ENCODE measurements at regions of chr1 and their contacts with region 1.

Region 1: GRCh38 chr1:2091611-2092604 is 41.7 kb downstream of the PRKCZ start:
- DNase-seq: peak; percentile 79
- ATAC-seq: peak; percentile 78
- H3K4me3 Mint-ChIP-seq: no peak overlapping the region
- H3K27ac Mint-ChIP-seq: no peak overlapping the region
- H3K4me1 Mint-ChIP-seq: peaks cover 3% of the 10 kb centered on the region
- H3K27me3 Mint-ChIP-seq: no peaks in the 10 kb centered on the region

Region 2: DNA sequence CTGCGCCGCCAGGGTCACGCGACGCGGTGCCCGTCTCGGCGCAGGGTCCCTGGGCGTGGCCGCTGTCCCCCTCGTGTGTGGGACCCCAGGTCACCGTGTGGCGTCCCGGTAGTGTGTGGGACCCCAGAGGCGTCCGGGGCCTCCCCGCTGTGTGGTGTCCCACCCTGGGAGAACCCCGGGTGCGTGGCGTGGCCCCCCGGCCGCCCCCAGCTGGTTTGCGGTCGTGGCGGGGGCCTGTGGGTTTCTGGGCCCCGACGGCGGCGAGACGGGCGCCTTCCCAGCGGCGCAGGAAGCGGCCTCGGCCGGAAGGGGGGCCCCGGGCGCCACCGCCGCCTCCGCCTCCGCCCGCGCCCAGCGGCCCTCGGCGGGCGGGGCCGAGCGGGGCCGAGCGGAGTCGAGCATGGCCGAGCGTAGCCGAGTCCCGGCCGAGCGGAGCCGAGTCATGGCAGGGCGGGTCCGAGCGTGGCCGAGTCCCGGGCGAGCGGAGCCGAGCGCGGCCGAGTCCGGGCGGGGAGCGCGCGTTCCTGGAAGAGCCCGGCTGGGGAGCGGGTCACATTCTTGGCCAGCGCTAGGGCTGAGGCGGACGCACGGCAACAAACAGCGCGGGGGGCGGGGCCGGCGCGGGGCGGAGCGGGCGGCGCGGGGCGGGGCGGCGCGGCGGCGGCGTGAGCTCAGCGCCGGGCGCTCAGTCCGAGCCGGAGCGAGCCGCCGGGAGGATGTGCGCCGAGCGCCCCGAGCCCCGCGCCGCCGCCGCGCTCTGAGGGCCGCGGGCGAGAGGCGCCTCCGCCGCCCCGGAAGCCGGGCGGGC is 135.6 kb after region 1 on chr1:
- CTCF ChIA-PET with region 1: no interaction called
- POLR2A ChIA-PET with region 1: no interaction called
- intact Hi-C with region 1: no loop called
- DNase-seq: peak; percentile 98
- ATAC-seq: peak; percentile 94
- H3K4me3 Mint-ChIP-seq: peak overlapping the region; percentile 32
- H3K27ac Mint-ChIP-seq: no peak overlapping the region
- H3K4me1 Mint-ChIP-seq: peaks cover 6% of the 10 kb centered on the region
- H3K27me3 Mint-ChIP-seq: no peaks in the 10 kb centered on the region

Region 3: DNA sequence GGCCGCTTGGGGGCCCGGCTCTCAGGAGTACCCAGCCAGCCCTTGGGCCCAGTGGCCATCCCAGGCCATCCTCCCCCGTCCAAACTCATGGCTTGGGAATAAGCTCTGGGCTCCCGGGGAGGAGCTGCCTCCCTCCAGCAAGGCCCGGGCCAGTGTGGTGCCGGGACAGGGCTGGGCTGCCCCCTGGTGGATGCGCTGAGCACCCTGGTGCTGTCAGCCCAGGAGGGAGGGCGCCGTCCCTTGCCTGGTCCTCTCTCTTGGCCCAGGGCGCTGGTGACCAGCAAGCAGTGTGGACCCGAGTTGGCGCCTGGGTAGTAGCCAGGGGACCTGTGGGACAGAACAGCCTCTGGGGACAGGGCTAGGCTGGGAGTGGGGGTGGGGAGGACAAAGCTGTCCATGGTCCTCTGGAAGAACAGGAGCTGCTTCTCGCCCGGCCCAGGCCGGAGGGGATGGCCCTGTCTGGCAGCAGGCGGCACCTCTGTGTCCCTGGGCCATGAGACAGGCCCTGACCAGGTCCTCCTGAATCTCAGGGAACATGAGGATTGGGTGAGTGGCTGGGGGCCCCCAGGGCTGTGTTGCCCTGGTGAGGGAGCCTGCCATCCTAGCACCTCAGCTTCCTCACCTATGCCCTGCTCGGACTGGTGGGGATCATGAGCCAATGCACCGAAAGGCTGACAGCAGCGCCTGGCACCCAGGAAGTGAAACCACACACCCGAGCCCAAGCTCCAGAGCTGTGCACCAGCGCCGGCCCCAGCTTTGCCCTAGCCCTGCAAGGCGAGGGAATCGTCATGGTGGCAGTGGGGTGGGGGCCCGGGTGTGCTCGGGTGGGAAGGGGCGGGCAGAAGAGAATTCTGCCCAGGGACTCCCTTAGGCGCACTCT is 290.1 kb after region 1 on chr1:
- CTCF ChIA-PET with region 1: no interaction called
- POLR2A ChIA-PET with region 1: no interaction called
- intact Hi-C with region 1: loop called in 1 of 2 experiments (anchors 5 kb)
- DNase-seq: peak; percentile 90
- ATAC-seq: peak; percentile 97
- H3K4me3 Mint-ChIP-seq: no peak overlapping the region
- H3K27ac Mint-ChIP-seq: no peak overlapping the region
- H3K4me1 Mint-ChIP-seq: no peaks in the 10 kb centered on the region
- H3K27me3 Mint-ChIP-seq: no peaks in the 10 kb centered on the region

Measured in activated CD4-positive, alpha-beta T cell treated with anti-CD3 and anti-CD28 coated beads for 36 hours (primary cell).